Activated naive CD4-positive, alpha-beta T cell treated with anti-CD3 and anti-CD28 coated beads for 36 hours (primary cell): ENCODE measurements at regions of chr3 and their contacts with region 1.

Region 1: GRCh38 chr3:147410526-147411237 is 1.5 kb downstream of the ZIC1 start:
- DNase-seq: no peak
- H3K4me3 Mint-ChIP-seq: peak overlapping the region; percentile 61
- H3K27ac Mint-ChIP-seq: no peak overlapping the region
- H3K4me1 Mint-ChIP-seq: peaks cover 50% of the 10 kb centered on the region
- H3K27me3 Mint-ChIP-seq: peaks cover 78% of the 10 kb centered on the region

Region 2: DNA sequence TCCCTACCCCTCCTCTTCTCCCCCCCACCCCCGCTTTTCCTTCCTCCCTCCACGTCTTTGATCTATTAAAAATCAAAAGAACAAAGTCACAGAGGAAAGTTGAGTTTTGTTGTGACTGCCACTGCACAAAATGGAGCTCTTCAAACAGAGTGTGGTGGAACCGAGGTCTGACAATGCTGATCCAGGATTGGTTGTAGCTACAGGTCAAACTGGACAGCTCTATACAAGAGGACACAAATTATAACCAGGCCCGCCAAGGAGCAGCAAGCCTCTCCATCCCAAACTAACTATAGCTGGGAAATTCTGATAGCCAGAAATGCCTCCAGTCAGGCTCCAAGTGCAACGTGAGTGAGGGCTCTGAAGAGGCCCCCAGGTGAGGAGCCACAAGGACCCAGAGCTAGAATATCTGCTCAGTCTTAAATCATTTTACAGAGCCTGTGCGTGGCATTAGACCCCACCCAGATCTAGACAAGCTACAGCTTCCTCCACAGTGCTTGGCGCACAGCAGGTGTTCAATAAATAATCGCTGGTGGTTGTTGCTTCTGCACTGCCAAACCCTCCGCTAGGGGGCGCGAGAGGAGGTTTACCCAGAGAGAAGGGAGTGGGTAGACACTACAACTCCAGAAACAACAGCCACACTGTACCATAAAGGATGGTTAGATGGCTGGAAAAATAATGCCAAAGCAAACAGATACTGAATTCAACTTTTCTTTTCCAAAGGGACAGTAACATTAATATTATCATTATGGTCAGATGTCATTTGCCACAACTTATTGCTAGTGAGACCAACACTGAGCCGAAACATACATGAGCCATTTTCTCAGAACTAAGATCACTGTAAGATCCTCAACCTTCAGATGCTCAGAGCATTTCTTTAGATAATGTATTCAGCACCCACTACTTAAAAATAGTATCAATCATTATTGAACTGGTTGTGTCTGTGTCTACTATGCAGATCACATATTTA is 48.9 kb before region 1 on chr3:
- CTCF ChIA-PET with region 1: no interaction called
- intact Hi-C with region 1: loop called (anchors 5 kb)
- DNase-seq: peak; percentile 65
- H3K4me3 Mint-ChIP-seq: no peak overlapping the region
- H3K27ac Mint-ChIP-seq: no peak overlapping the region
- H3K4me1 Mint-ChIP-seq: peaks cover 5% of the 10 kb centered on the region
- H3K27me3 Mint-ChIP-seq: peaks cover 65% of the 10 kb centered on the region

Region 3: GRCh38 chr3:147377412-147378367 is 33.0 kb before region 1 on chr3:
- CTCF ChIA-PET with region 1: no interaction called
- intact Hi-C with region 1: loop called (anchors 5 kb)
- DNase-seq: no peak
- H3K4me3 Mint-ChIP-seq: no peak overlapping the region
- H3K27ac Mint-ChIP-seq: no peak overlapping the region
- H3K4me1 Mint-ChIP-seq: no peaks in the 10 kb centered on the region
- H3K27me3 Mint-ChIP-seq: peaks cover 77% of the 10 kb centered on the region

Region 4: GRCh38 chr3:147390589-147391569 is 19.8 kb before region 1 on chr3:
- CTCF ChIA-PET with region 1: no interaction called
- intact Hi-C with region 1: loop called (anchors 1 kb)
- DNase-seq: no peak
- H3K4me3 Mint-ChIP-seq: no peak overlapping the region
- H3K27ac Mint-ChIP-seq: no peak overlapping the region
- H3K4me1 Mint-ChIP-seq: peaks cover 2% of the 10 kb centered on the region
- H3K27me3 Mint-ChIP-seq: peaks cover 92% of the 10 kb centered on the region